ENCODE measurements at regions of chr20 and their contacts with region 1.

Region 1: GRCh38 chr20:21557241-21558020 is 43.6 kb upstream of the NKX2-2 start:
- DNase-seq: no peak
- H3K4me3 ChIP-seq: no peak overlapping the region
- H3K27ac ChIP-seq: no peak overlapping the region
- H3K4me1 ChIP-seq: no peaks in the 10 kb centered on the region
- H3K27me3 ChIP-seq: peaks cover 4 to 87% (median 7%) of the 10 kb centered on the region in 5 experiments

Region 2: DNA sequence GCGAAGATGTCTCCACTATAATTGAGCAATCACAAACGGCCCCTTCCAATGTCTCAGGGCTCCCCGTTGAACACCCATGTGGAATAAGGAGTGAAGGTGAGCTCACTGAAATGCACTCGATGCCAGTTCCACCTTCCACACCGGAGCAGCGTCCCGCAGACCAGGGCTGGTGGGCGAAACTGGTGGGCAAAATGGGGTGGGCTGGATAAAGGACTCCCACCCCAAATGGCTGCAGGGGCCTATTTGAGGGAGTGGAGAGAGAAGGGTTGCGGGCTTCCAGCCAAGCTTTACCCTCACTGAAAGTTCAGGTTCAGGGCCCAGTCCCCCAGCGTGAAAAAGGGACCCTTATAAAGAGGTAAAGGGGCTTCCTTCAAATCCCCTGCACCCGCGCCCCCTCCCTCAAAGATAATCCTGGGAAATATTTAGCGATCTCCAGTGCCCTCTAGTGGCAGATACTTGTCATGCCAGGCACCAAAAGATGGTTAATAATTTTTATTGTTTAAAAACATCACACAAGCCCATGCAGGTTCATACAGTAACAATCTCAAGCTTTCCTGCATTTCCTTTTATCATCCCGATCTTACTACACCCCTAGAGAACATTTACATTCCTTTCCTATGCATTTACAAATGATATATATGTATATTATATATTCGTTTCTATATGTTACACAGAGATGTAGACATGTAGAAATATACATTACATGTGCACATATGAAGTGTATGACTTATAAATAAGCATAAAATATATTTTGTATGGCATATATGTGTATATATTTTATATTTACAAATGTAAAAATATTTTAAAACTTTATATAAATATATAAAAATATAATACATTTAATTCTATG is 14.6 kb after region 1 on chr20:
- CTCF ChIA-PET with region 1: interaction called, 13 read pairs
- POLR2A ChIA-PET with region 1: no interaction called
- DNase-seq: peak; percentile 8 to 30 (median 19)
- H3K4me3 ChIP-seq: no peak overlapping the region
- H3K27ac ChIP-seq: no peak overlapping the region
- H3K4me1 ChIP-seq: peaks cover 0 to 3% (median 0%) of the 10 kb centered on the region in 4 experiments
- H3K27me3 ChIP-seq: peaks cover 2 to 88% (median 23%) of the 10 kb centered on the region in 5 experiments

Region 3: GRCh38 chr20:21632031-21632734 is 74.8 kb after region 1 on chr20:
- CTCF ChIA-PET with region 1: no interaction called
- POLR2A ChIA-PET with region 1: no interaction called
- DNase-seq: no peak
- H3K4me3 ChIP-seq: no peak overlapping the region
- H3K27ac ChIP-seq: no peak overlapping the region
- H3K4me1 ChIP-seq: no peaks in the 10 kb centered on the region
- H3K27me3 ChIP-seq: peaks cover 0 to 13% (median 7%) of the 10 kb centered on the region in 5 experiments

Measured in common myeloid progenitor, CD34-positive (primary cell).